Cardiac septum (tissue), 1 donor: ENCODE measurements at regions of chr3 and their contacts with region 1.

Region 1: GRCh38 chr3:98593046-98593936 is at the start of gene CPOX:
- DNase-seq: peak; percentile 96
- total RNA-seq, gene CPOX: 10.3 TPM

Region 2: GRCh38 chr3:98522244-98523090 is 70.8 kb before region 1 on chr3 and contains the start of gene CLDND1:
- intact Hi-C with region 1: loop called (anchors 2 kb)
- DNase-seq: peak; percentile 99
- total RNA-seq, gene CLDND1: 80.8 TPM

Region 3: GRCh38 chr3:98784666-98785600 is 191.6 kb after region 1 on chr3:
- intact Hi-C with region 1: loop called (anchors 10 kb)
- DNase-seq: no peak

Region 4: GRCh38 chr3:98901392-98902350 is 308.4 kb after region 1 on chr3 and contains the start of gene DCBLD2:
- intact Hi-C with region 1: loop called (anchors 5 kb)
- DNase-seq: peak; percentile 98
- total RNA-seq, gene DCBLD2: 67.7 TPM

Region 5: DNA sequence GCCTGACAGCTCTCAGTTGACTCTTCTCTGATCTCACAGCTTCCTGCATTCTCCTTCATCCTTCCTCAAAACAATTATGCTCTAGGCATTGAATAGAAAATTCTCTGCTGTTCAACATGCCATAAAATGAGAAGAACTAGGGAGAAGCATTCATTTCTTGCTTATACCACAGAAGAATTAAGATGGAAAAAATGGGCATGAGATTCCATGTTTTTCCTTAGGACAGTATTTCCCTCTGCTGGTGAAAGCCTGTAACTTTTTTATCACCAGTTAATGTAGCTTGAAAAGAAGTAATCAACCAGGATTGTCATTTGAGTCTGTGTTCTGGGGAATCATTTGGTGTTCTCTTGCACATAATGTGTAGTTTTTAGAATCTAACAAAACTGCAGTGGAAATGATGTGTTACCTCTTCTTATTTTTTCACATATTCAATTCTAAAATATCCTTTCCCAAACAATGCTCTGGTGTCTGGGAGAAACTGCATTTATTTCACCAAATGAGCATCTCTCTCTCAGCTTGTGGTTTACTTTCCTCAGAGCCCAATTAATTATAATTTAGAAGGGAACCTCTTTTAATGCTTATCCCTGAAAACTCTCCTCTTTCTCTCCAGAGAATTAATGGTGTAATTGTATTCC is 401.0 kb after region 1 on chr3:
- intact Hi-C with region 1: loop called (anchors 5 kb)
- DNase-seq: no peak

Region 6: GRCh38 chr3:99753268-99753975 is 1160.1 kb after region 1 on chr3:
- intact Hi-C with region 1: loop called (anchors 10 kb)
- DNase-seq: no peak